ENCODE measurements at regions of chr20 and their contacts with region 1.

Region 1: GRCh38 chr20:13119583-13119982 is 101.5 kb upstream of the ISM1 start:
- DNase-seq: no peak
- ATAC-seq: peak; percentile 77
- H3K4me3 ChIP-seq: no peak overlapping the region
- H3K27ac ChIP-seq: no peak overlapping the region
- H3K4me1 ChIP-seq: no peaks in the 10 kb centered on the region
- H3K27me3 ChIP-seq: no peaks in the 10 kb centered on the region
- CTCF ChIP-seq: peak; percentile 78 to 93 (median 81)
- EP300 ChIP-seq: no peak
- POLR2A ChIP-seq: no peak
- RAD21 ChIP-seq: peak; percentile 95

Region 2: DNA sequence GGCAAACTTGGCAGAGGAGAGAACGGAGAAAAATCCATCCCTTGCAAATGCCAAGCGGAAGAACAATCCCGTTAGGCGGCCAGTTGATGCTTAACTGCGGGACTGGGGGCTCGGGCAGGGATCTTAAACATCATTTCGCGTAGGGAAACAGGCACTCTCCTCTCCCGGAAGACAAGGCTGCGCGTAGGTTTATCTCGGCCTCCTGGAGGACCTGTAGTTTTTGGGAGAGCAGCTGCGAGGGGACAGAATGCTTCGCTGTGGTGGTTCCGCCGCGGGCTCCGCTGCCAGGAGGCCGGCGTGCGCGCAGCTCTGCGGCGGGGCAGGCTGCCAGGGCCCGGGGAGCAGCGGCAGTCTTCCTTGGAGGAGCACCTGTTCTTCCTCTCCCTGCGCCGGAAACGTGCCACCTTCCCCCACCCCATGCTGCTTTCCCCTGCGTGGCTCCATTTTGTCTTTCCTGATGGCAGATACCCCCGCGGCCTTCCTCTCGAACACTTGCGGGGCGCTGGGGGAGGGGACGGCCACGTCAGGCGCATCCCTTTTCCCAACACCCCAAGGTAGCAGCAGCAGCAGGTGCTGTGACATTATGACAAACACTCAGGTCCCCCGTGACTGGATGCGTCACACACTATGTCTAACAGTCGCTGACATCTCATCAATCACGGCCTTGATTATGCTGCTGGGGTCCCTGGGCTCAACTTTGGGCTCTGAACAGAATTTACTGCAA is 1432.6 kb before region 1 on chr20:
- CTCF ChIA-PET with region 1: no interaction called
- POLR2A ChIA-PET with region 1: no interaction called
- RAD21 ChIA-PET with region 1: no interaction called
- SMC1A ChIA-PET with region 1: no interaction called
- in situ Hi-C with region 1: loop called (anchors 10 kb)
- intact Hi-C with region 1: no loop called
- DNase-seq: no peak
- ATAC-seq: no peak
- H3K4me3 ChIP-seq: no peak overlapping the region
- H3K27ac ChIP-seq: no peak overlapping the region
- H3K4me1 ChIP-seq: no peaks in the 10 kb centered on the region
- H3K27me3 ChIP-seq: no peaks in the 10 kb centered on the region
- CTCF ChIP-seq: no peak
- EP300 ChIP-seq: no peak
- POLR2A ChIP-seq: no peak
- RAD21 ChIP-seq: no peak

Region 3: GRCh38 chr20:12722096-12722495 is 397.5 kb before region 1 on chr20:
- CTCF ChIA-PET with region 1: no interaction called
- POLR2A ChIA-PET with region 1: no interaction called
- RAD21 ChIA-PET with region 1: no interaction called
- SMC1A ChIA-PET with region 1: no interaction called
- in situ Hi-C with region 1: no loop called
- intact Hi-C with region 1: no loop called
- DNase-seq: no peak
- ATAC-seq: no peak
- H3K4me3 ChIP-seq: no peak overlapping the region
- H3K27ac ChIP-seq: no peak overlapping the region
- H3K4me1 ChIP-seq: no peaks in the 10 kb centered on the region
- H3K27me3 ChIP-seq: no peaks in the 10 kb centered on the region
- CTCF ChIP-seq: no peak
- EP300 ChIP-seq: no peak
- POLR2A ChIP-seq: no peak
- RAD21 ChIP-seq: no peak

Region 4: GRCh38 chr20:13221673-13222318 is 102.2 kb after region 1 on chr20:
- CTCF ChIA-PET with region 1: no interaction called
- POLR2A ChIA-PET with region 1: no interaction called
- RAD21 ChIA-PET with region 1: no interaction called
- SMC1A ChIA-PET with region 1: no interaction called
- in situ Hi-C with region 1: no loop called
- intact Hi-C with region 1: no loop called
- DNase-seq: no peak
- ATAC-seq: peak; percentile 90
- H3K4me3 ChIP-seq: no peak overlapping the region; the same call in 1 of the 2 replicates
- H3K27ac ChIP-seq: no peak overlapping the region
- H3K4me1 ChIP-seq: peaks cover 4% of the 10 kb centered on the region; the same call in 1 of the 2 replicates
- H3K27me3 ChIP-seq: peaks cover 9 to 30% of the 10 kb centered on the region in 2 experiments
- CTCF ChIP-seq: no peak
- EP300 ChIP-seq: no peak
- POLR2A ChIP-seq: no peak
- RAD21 ChIP-seq: no peak

Region 5: GRCh38 chr20:13302647-13303450 is 183.3 kb after region 1 on chr20:
- CTCF ChIA-PET with region 1: interaction called, 27 read pairs
- POLR2A ChIA-PET with region 1: no interaction called
- RAD21 ChIA-PET with region 1: interaction called, 4 read pairs
- SMC1A ChIA-PET with region 1: interaction called, 15 read pairs
- in situ Hi-C with region 1: loop called (anchors 10 kb)
- intact Hi-C with region 1: loop called (anchors 1 kb)
- DNase-seq: no peak
- ATAC-seq: peak; percentile 99
- H3K4me3 ChIP-seq: no peak overlapping the region
- H3K27ac ChIP-seq: no peak overlapping the region
- H3K4me1 ChIP-seq: no peaks in the 10 kb centered on the region
- H3K27me3 ChIP-seq: no peaks in the 10 kb centered on the region
- CTCF ChIP-seq: peak; percentile 55 to 83 (median 70)
- EP300 ChIP-seq: no peak
- POLR2A ChIP-seq: no peak
- RAD21 ChIP-seq: peak; percentile 64

Region 6: GRCh38 chr20:13325033-13325432 is 205.4 kb after region 1 on chr20:
- CTCF ChIA-PET with region 1: interaction called, 12 read pairs
- POLR2A ChIA-PET with region 1: no interaction called
- RAD21 ChIA-PET with region 1: interaction called, 8 read pairs
- SMC1A ChIA-PET with region 1: interaction called, 4 read pairs
- in situ Hi-C with region 1: no loop called
- intact Hi-C with region 1: no loop called
- DNase-seq: no peak
- ATAC-seq: peak; percentile 62
- H3K4me3 ChIP-seq: no peak overlapping the region
- H3K27ac ChIP-seq: no peak overlapping the region
- H3K4me1 ChIP-seq: no peaks in the 10 kb centered on the region; the same call in 1 of the 2 replicates
- H3K27me3 ChIP-seq: no peaks in the 10 kb centered on the region
- CTCF ChIP-seq: peak; percentile 28 to 42 (median 30); a peak in 4 of 6 replicates
- EP300 ChIP-seq: no peak
- POLR2A ChIP-seq: no peak
- RAD21 ChIP-seq: peak; percentile 58; the same call in 1 of the 2 replicates

Region 7: DNA sequence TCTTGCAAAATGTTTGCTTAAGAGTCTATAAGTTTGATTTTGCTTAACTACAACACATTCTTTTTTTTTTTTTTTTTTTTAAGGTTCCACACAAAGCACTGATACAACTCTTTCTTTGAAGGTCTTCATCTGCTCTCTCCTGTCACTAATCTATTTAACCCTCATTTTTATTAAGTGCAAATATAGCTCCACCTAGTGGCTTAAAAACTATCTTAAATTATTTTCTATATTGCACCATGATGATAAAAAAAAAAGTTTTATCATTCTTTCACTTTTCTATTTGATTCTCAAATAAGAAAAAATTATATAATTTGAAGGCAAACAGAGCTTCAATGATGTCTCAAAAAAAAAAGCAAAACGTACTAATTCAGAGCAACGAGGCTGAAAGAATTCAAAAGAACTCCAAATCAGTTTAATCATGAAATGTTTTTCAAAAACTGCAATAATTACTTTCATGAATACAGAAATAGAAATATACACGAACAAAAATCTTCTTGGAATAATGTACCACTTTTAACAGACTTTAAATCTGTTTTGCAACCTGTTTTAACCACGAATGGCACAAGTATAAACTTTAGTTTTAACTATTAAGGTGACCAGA is 652.4 kb after region 1 on chr20:
- CTCF ChIA-PET with region 1: interaction called, 14 read pairs
- POLR2A ChIA-PET with region 1: no interaction called
- RAD21 ChIA-PET with region 1: interaction called, 6 read pairs
- SMC1A ChIA-PET with region 1: interaction called, 15 read pairs
- in situ Hi-C with region 1: loop called (anchors 5 kb)
- intact Hi-C with region 1: loop called (anchors 5 kb)
- DNase-seq: no peak
- ATAC-seq: peak; percentile 64
- H3K4me3 ChIP-seq: no peak overlapping the region
- H3K27ac ChIP-seq: no peak overlapping the region
- H3K4me1 ChIP-seq: 0 out of 2 replicates have a peak, but pooled peaks cover 3% of the 10 kb centered on the region
- H3K27me3 ChIP-seq: no peaks in the 10 kb centered on the region
- CTCF ChIP-seq: peak in 2 of 3 experiments; percentile 20 to 43; a peak in 2 of 6 replicates
- EP300 ChIP-seq: no peak
- POLR2A ChIP-seq: no peak
- RAD21 ChIP-seq: peak; percentile 53

Region 8: DNA sequence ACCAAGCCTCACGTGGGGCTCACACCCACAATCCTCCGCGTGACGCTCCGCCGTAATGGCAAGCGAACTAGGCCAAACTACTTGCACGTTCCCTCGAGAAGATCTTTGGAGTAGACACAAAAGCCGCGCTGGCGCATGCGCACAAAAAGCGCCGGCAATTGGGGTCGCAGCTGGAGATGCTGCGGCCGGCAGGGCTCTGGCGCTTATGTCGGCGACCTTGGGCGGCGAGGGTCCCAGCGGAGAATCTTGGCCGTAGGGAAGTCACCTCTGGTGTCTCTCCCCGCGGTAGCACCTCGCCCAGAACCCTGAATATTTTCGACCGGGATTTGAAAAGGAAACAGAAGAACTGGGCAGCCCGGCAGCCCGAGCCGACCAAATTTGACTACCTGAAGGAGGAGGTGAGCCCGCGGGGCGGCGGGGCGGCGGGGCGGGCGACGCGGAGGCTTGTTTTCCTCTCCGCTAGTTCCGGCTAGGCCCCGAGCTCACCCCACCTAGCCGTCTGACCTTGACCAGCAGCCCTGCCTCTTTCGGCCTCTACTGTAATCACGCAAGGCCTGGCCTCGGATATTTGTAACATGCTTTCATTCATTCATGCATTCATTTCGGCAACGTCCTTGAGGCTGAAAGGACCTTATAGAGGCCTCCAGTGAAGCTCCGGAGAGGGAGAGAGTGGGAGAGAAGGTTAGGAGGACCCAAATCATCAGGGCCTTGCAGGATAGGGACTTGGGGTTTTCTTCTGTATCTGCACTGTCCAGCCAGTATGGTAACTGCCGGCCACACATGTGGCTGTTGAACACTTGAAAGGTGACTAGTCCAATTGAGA is 665.5 kb after region 1 on chr20 and contains the starts of genes ESF1 and NDUFAF5:
- CTCF ChIA-PET with region 1: interaction called, 14 read pairs
- POLR2A ChIA-PET with region 1: no interaction called
- RAD21 ChIA-PET with region 1: interaction called, 8 read pairs
- SMC1A ChIA-PET with region 1: interaction called, 5 read pairs
- in situ Hi-C with region 1: no loop called
- intact Hi-C with region 1: no loop called
- DNase-seq: peak; percentile 95
- ATAC-seq: peak; percentile 93
- H3K4me3 ChIP-seq: peak within 1 kb of the TSS; percentile 99
- H3K27ac ChIP-seq: peak within 1 kb of the TSS; percentile 80
- H3K4me1 ChIP-seq: peaks cover 5% of the 10 kb centered on the region
- H3K27me3 ChIP-seq: no peaks in the 10 kb centered on the region
- CTCF ChIP-seq: no peak
- EP300 ChIP-seq: no peak
- POLR2A ChIP-seq: peak; percentile 40
- RAD21 ChIP-seq: no peak
- polyA plus RNA-seq, gene ESF1: 20.2 to 27.6 TPM
- polyA plus RNA-seq, gene NDUFAF5: 24.7 to 27.5 TPM

Measured in GM12878 (cell line).